Activated CD4-positive, alpha-beta T cell treated with anti-CD3 and anti-CD28 coated beads for 36 hours (primary cell): ENCODE measurements at regions of chr14 and their contacts with region 1.

Region 1: GRCh38 chr14:22039938-22040775 is 366.5 kb upstream of the OR4E1 start:
- DNase-seq: peak; percentile 70
- ATAC-seq: peak; percentile 94
- H3K4me3 Mint-ChIP-seq: peak overlapping the region; percentile 73
- H3K27ac Mint-ChIP-seq: peak overlapping the region; percentile 70
- H3K4me1 Mint-ChIP-seq: peaks cover 12% of the 10 kb centered on the region
- H3K27me3 Mint-ChIP-seq: no peaks in the 10 kb centered on the region

Region 2: DNA sequence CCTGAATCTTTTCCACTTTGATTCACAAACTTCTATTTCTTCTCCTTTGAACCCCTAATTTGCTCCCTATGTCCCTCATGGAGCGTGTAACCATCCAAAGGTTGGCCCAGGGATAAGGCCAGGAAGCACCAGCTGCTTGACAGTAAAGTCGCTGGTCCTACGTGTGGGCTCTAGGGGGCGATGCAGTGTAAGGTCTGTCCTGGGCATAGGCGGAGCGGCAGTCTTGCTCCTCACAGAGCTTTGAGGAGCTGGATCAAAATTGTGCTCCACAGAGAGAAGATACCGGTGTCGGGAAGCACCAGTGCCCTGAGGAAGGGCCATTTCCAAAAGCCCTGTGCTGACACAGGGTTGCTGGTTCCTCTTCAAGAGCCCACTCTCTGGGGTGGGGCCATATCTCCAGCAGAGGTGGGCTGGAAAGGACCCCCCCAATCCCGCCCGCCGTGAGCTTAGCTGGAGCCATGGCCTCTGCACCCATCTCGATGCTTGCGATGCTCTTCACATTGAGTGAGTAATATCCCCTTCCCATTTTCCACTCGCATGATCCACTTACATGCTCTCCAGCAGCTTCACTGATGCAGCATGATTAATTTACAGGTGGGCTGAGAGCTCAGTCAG is 316.6 kb before region 1 on chr14:
- CTCF ChIA-PET with region 1: no interaction called
- POLR2A ChIA-PET with region 1: no interaction called
- intact Hi-C with region 1: no loop called
- DNase-seq: peak; percentile 71
- ATAC-seq: peak; percentile 90
- H3K4me3 Mint-ChIP-seq: peak overlapping the region; percentile 70
- H3K27ac Mint-ChIP-seq: peak overlapping the region; percentile 77
- H3K4me1 Mint-ChIP-seq: no peaks in the 10 kb centered on the region
- H3K27me3 Mint-ChIP-seq: peaks cover 21% of the 10 kb centered on the region

Region 3: GRCh38 chr14:22002860-22003309 is 37.3 kb before region 1 on chr14:
- CTCF ChIA-PET with region 1: interaction called, 7 read pairs
- POLR2A ChIA-PET with region 1: no interaction called
- intact Hi-C with region 1: loop called (anchors 5 kb)
- DNase-seq: peak; percentile 87
- ATAC-seq: peak; percentile 80
- H3K4me3 Mint-ChIP-seq: peak overlapping the region; percentile 80
- H3K27ac Mint-ChIP-seq: peak overlapping the region; percentile 83
- H3K4me1 Mint-ChIP-seq: peaks cover 26% of the 10 kb centered on the region
- H3K27me3 Mint-ChIP-seq: no peaks in the 10 kb centered on the region

Region 4: DNA sequence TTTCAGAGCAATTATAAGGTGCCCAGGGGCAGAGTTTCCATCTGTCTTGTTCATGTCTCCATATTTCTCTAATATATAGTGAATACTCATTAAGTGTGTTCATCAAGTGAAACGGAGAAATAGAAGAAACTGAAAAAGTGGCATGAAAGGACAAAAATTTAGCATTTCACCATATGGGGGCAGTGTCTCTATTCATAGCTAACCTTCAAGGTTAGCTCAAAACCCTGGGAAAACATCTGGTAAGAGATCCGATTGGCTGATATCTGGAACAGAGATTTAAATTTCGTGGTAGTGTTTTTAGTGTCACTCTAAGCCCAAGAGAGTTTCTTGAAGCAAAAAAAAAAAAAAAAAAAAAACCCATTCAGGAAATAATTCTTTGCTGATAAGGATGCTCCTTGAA is 181.4 kb after region 1 on chr14:
- CTCF ChIA-PET with region 1: no interaction called
- POLR2A ChIA-PET with region 1: no interaction called
- intact Hi-C with region 1: no loop called
- DNase-seq: no peak
- ATAC-seq: no peak
- H3K4me3 Mint-ChIP-seq: peak overlapping the region; percentile 58
- H3K27ac Mint-ChIP-seq: peak overlapping the region; percentile 51
- H3K4me1 Mint-ChIP-seq: peaks cover 14% of the 10 kb centered on the region
- H3K27me3 Mint-ChIP-seq: no peaks in the 10 kb centered on the region